ENCODE measurements at regions of chr15 and their contacts with region 1.

Region 1: GRCh38 chr15:89171136-89172072 is 50.0 kb downstream of the RLBP1 start:
- DNase-seq: peak; percentile 44 to 93
- H3K4me3 ChIP-seq: no peak overlapping the region
- H3K27ac ChIP-seq: no peak overlapping the region
- H3K4me1 ChIP-seq: peaks cover 0 to 5% (median 1%) of the 10 kb centered on the region in 4 experiments; a peak in 2 of 7 replicates
- H3K27me3 ChIP-seq: no peaks in the 10 kb centered on the region
- CTCF ChIP-seq: peak; percentile 32 to 87 (median 84)
- EP300 ChIP-seq: no peak
- POLR2A ChIP-seq: no peak
- RAD21 ChIP-seq: peak; percentile 79 to 87

Region 2: DNA sequence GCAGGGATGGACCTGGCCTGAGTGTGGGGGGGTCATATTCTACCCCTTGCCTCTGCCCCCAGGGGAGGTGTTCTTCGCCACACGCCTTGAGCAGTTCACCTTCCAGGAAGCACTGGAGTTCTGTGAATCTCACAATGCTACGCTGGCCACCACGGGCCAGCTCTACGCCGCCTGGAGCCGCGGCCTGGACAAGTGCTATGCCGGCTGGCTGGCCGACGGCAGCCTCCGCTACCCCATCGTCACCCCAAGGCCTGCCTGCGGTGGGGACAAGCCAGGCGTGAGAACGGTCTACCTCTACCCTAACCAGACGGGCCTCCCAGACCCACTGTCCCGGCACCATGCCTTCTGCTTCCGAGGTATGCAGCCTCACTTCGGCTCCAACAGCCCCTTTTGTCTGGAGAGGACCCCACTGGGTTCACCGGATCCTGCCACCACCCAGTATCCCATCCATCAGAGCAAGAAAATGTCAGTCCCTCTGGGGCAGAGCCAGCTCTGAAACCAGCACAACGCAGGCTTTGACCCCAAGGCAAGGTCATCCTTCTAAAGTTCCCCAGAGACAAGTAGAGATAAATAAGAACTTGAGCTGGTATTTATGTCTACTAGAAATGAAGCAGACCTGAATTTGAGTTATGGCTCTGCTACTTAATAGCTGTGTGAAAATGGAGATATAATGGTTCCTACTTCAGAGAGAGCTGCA is 321.9 kb before region 1 on chr15:
- CTCF ChIA-PET with region 1: no interaction called
- POLR2A ChIA-PET with region 1: no interaction called
- DNase-seq: no peak
- H3K4me3 ChIP-seq: no peak overlapping the region
- H3K27ac ChIP-seq: no peak overlapping the region
- H3K4me1 ChIP-seq: no peaks in the 10 kb centered on the region
- H3K27me3 ChIP-seq: no peaks in the 10 kb centered on the region
- CTCF ChIP-seq: no peak
- EP300 ChIP-seq: no peak
- POLR2A ChIP-seq: no peak
- RAD21 ChIP-seq: no peak

Region 3: GRCh38 chr15:89087830-89088604 is 83.4 kb before region 1 on chr15 and contains the start of gene ABHD2:
- CTCF ChIA-PET with region 1: interaction called, 15 read pairs
- POLR2A ChIA-PET with region 1: no interaction called
- DNase-seq: peak; percentile 99
- H3K4me3 ChIP-seq: peak within 1 kb of the TSS; percentile 84 to 90 (median 87)
- H3K27ac ChIP-seq: peak within 1 kb of the TSS; percentile 35; the same call in 1 of the 2 replicates
- H3K4me1 ChIP-seq: peaks cover 8 to 20% (median 12%) of the 10 kb centered on the region in 4 experiments
- H3K27me3 ChIP-seq: no peaks in the 10 kb centered on the region
- CTCF ChIP-seq: no peak
- EP300 ChIP-seq: peak in 1 of 2 experiments; percentile 56; a peak in 1 of 3 replicates
- POLR2A ChIP-seq: peak in 1 of 2 experiments; percentile 80; a peak in 2 of 3 replicates
- RAD21 ChIP-seq: no peak
- total RNA-seq, gene ABHD2: 23.7 and 27.6 TPM in 2 replicates

Region 4: DNA sequence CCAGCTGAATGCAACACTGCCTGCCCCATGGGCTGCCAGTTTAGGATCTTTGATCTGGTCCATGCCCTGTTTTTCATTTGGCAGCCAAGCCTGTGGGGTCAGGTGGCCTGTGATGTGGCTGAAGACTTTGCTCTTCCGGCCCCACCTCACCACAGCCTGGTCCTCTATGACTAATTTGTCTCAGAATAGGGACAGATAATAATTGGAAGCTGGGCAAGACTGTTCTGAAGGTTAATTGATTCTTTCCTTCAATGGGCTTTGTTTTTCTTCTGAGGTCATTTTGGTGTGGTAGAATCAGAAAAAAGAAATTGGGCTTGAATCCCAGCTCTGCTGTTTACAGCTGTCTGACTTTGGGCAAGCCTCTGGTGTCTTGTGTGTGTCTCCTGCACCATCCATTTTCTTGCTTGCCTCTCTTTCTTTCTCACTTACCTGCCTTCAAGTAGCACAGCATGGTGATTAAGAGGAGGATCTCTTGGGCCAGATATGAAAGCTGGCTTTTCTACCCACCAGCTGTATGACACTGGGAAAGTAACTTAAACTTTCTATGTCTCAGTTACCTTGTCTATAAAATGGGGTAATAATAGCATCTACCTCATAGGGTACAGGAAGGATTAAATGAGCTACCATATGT is 58.9 kb before region 1 on chr15:
- CTCF ChIA-PET with region 1: interaction called, 10 read pairs
- POLR2A ChIA-PET with region 1: no interaction called
- DNase-seq: no peak
- H3K4me3 ChIP-seq: no peak overlapping the region
- H3K27ac ChIP-seq: no peak overlapping the region
- H3K4me1 ChIP-seq: peaks cover 12 to 35% (median 16%) of the 10 kb centered on the region in 4 experiments
- H3K27me3 ChIP-seq: peaks cover 0 to 1% (median 0%) of the 10 kb centered on the region in 4 experiments; a peak in 1 of 7 replicates
- CTCF ChIP-seq: no peak
- EP300 ChIP-seq: no peak
- POLR2A ChIP-seq: no peak
- RAD21 ChIP-seq: no peak

Region 5: GRCh38 chr15:89150762-89151664 is 20.4 kb before region 1 on chr15:
- CTCF ChIA-PET with region 1: interaction called, 20 read pairs
- POLR2A ChIA-PET with region 1: no interaction called
- DNase-seq: no peak
- H3K4me3 ChIP-seq: no peak overlapping the region
- H3K27ac ChIP-seq: no peak overlapping the region
- H3K4me1 ChIP-seq: no peaks in the 10 kb centered on the region
- H3K27me3 ChIP-seq: no peaks in the 10 kb centered on the region
- CTCF ChIP-seq: no peak
- EP300 ChIP-seq: no peak
- POLR2A ChIP-seq: no peak
- RAD21 ChIP-seq: no peak

Region 6: GRCh38 chr15:89187976-89188514 is 16.6 kb after region 1 on chr15:
- CTCF ChIA-PET with region 1: interaction called, 19 read pairs
- POLR2A ChIA-PET with region 1: interaction called, 3 read pairs
- DNase-seq: no peak
- H3K4me3 ChIP-seq: no peak overlapping the region
- H3K27ac ChIP-seq: no peak overlapping the region
- H3K4me1 ChIP-seq: no peaks in the 10 kb centered on the region; a peak in 1 of 7 replicates
- H3K27me3 ChIP-seq: no peaks in the 10 kb centered on the region
- CTCF ChIP-seq: no peak
- EP300 ChIP-seq: no peak
- POLR2A ChIP-seq: no peak
- RAD21 ChIP-seq: no peak